ENCODE measurements at regions of chr3 and their contacts with region 1.

Region 1: GRCh38 chr3:48400824-48401433 is 28.9 kb downstream of the FBXW12 start:
- DNase-seq: peak; percentile 62
- H3K4me3 ChIP-seq: no peak overlapping the region
- H3K27ac ChIP-seq: no peak overlapping the region
- H3K4me1 ChIP-seq: peaks cover 22% of the 10 kb centered on the region
- H3K27me3 ChIP-seq: no peaks in the 10 kb centered on the region
- CTCF ChIP-seq: peak; percentile 67 to 80

Region 2: DNA sequence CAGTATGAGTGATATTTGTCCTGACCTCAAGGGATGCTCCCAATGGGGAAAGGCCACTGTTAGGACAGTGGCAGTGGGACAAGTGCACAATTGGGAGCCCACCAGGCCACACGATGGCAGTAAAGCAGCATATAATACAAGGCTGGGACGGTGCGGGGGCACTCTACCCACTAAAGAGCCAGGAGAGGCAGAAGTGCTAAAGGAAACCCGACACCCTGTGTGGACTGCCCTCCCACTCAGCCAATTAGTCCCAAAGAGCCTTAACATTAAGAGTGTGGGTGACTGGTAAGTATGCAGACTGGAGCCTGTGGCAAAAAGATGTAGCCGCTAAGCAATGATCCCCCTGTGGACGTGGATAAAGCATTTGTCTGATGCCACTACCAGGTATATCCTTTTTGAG is 168.2 kb before region 1 on chr3:
- CTCF ChIA-PET with region 1: no interaction called
- dilution Hi-C with region 1: no loop called
- in situ Hi-C with region 1: no loop called
- intact Hi-C with region 1: loop called (anchors 1 kb)
- DNase-seq: peak; percentile 60
- H3K4me3 ChIP-seq: peak overlapping the region in 1 of 3 experiments; percentile 4
- H3K27ac ChIP-seq: no peak overlapping the region
- H3K4me1 ChIP-seq: peaks cover 5% of the 10 kb centered on the region
- H3K27me3 ChIP-seq: no peaks in the 10 kb centered on the region
- CTCF ChIP-seq: peak; percentile 52 to 74

Region 3: DNA sequence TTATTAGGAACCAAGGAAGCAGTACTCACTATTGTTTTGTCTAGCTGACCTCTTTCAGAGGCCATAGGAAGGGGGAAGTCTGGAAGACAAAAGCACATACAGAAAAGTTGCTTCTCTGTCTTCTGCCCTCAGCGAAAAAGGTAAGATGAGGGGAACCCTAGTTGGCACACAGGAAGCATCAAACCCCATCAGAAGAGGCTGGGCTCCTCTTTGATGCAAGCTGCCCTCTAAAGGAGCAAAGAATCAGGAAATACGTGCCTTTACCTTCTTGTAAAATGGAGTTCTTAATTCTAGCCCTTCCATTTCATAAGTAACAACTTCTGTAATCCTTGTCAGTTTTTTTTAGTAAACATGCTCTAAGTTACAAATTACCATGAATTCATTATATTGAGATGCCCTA is 79.9 kb before region 1 on chr3:
- CTCF ChIA-PET with region 1: no interaction called
- dilution Hi-C with region 1: loop called (anchors 5 kb)
- in situ Hi-C with region 1: no loop called
- intact Hi-C with region 1: no loop called
- DNase-seq: no peak
- H3K4me3 ChIP-seq: no peak overlapping the region
- H3K27ac ChIP-seq: no peak overlapping the region
- H3K4me1 ChIP-seq: no peaks in the 10 kb centered on the region
- H3K27me3 ChIP-seq: no peaks in the 10 kb centered on the region
- CTCF ChIP-seq: no peak

Region 4: DNA sequence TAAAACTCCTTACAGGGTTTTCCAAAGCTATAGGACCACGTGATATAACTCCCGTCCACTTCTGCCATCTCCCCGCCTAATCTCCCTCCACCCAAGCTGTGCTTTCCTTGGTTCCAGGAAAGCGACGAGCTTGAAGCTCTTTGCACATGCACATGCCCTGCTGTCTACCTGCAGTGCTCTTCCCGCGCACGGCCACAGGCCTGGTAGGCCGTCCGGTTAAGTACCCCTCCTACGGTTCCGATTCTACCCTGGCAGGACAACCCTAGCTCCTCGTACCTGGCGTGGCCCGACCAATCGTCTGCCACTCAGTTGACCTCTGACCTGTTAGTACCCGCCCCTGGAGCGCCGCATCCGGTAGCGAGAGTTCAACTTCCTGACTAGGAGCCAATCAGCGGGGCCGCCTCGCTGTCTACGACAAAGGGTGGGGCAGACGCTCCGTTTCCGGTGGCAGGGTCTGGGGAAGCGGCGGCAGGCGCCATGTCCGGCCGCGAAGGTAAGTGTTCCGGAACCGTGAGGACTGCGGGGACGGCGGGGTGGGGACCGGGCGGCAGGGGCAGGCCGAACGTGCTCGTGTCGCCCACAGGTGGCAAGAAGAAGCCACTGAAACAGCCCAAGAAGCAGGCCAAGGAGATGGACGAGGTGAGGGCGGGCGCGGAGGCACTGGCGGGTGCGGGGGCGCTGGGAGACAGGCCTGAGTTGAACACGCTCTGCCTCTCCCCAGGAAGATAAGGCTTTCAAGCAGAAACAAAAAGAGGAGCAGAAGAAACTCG is 39.1 kb after region 1 on chr3 and contains the starts of genes CCDC51 and TMA7:
- CTCF ChIA-PET with region 1: interaction called, 143 read pairs
- dilution Hi-C with region 1: loop called (anchors 5 kb)
- in situ Hi-C with region 1: loop called (anchors 5 kb)
- intact Hi-C with region 1: loop called (anchors 1 kb)
- DNase-seq: peak; percentile 97
- H3K4me3 ChIP-seq: peak within 1 kb of the TSS; percentile 64 to 97 (median 96)
- H3K27ac ChIP-seq: peak within 1 kb of the TSS; percentile 63
- H3K4me1 ChIP-seq: peaks cover 20% of the 10 kb centered on the region
- H3K27me3 ChIP-seq: no peaks in the 10 kb centered on the region
- CTCF ChIP-seq: no peak
- total RNA-seq, gene CCDC51: 25.6 to 27.3 TPM
- total RNA-seq, gene TMA7: 80.5 to 270 TPM

Measured in mammary epithelial cell (primary cell).